ENCODE measurements at regions of chr6 and their contacts with region 1.

Region 1: DNA sequence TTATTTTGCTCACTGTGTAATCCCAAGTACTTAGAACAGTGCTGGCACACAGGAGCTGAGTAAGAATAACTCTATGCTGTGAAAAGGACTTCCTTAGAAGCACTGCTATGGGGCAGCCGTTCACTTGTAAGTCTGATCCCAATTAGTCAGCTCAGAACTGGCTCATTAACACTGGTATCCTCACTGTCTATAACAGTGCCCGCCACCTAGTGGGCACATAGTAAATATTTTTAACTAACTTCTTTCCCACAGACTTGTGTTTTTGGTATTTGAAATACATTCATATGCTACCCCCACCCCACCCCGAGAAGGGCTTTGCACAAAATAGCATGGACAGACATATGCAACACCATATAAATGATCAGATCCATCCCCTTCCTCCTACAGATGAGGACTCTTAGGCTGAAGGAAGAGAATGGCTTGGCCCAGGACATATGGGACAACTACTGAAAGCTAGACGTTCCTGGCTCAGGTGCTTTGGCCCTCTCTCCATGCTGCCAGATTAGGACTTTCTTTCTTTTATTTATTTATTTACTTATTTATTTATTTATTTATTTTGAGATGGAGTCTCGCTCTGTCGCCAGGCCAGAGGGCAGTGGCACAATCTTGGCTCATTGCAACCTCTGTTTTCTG is 47.1 kb downstream of the DST start:
- H3K4me3 ChIP-seq: no peak overlapping the region
- H3K27ac ChIP-seq: no peak overlapping the region
- H3K4me1 ChIP-seq: no peaks in the 10 kb centered on the region
- CTCF ChIP-seq: 0 out of 2 replicates have a peak, but pooled peaks have one; percentile 18

Region 2: GRCh38 chr6:56359201-56359899 is 236.3 kb before region 1 on chr6:
- CTCF ChIA-PET with region 1: interaction called, 117 read pairs
- POLR2A ChIA-PET with region 1: no interaction called
- H3K4me3 ChIP-seq: no peak overlapping the region
- H3K27ac ChIP-seq: no peak overlapping the region
- H3K4me1 ChIP-seq: peaks cover 3% of the 10 kb centered on the region; the same call in 1 of the 2 replicates
- CTCF ChIP-seq: peak; percentile 65

Region 3: DNA sequence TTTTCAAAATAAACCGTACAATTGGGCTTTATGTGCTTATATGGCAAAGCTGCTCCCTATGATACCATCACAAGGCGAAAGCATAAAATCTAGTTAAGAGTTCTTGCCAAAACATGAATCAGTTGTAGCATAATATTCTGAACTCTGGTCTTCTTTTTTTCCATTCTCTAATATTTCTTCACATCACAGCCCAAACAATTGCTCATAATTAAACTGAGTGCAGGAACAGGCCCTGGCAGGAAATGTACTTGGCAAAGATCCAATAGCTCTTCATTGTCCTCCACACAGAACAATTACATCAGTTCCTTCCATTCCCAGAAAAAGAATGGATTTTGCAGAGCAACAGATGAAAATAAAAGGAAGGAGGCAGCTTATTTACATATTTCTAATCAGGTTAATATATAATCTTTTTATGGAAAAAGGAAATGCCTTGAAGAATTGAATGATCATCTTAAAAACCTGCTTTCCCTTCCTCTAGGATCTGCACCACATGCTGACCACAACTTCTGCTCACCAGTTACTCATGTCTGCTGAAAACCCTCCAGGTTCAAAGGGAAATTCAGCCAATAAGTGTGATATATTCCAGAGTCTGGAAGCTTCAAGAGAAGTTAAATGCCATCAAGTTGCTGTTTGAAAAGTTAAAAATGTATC is 224.9 kb before region 1 on chr6:
- CTCF ChIA-PET with region 1: interaction called, 47 read pairs
- POLR2A ChIA-PET with region 1: no interaction called
- H3K4me3 ChIP-seq: no peak overlapping the region
- H3K27ac ChIP-seq: no peak overlapping the region
- H3K4me1 ChIP-seq: peaks cover 2% of the 10 kb centered on the region
- CTCF ChIP-seq: no peak

Region 4: DNA sequence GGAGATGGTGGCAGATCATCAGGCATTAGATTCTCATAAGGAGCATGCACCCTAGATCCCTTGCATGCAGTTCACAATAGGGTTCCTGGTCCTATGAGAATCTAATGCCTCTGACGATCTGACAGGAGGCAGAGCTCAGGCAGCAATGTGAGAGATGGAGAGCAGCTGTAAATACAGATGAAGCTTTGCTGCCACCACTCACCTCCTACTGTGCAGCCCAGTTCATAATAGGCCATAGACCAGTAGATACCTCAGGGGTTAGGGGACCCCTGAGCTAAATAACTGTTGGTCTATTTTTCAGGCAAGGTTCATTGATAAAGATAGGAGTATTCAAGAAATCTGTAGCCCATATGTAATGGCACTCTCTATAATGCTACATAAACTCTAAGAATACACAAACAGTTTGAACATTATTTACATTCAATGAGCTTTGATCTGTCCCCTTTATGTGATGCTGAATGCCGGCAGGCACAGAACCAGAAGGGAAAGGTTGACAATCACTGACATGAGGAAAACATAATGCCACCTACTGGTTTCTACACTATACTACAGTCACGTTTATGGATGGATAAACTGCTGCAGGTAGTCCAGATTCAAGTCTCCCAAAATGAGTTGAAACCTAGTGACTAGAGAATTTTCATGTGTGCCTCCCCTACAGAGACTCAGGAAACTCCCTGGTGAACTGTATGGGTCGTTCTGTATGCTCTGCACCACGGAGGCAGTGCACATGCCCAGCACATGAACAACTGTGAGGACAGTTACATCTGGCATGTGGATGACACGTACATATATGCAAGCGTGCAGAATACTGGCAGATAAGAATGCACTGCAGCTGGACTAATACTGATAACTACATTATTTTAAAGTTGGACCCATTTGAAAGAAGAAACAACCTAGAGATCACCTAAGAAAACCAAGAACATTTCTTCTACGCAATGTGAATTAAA is 24.9 kb before region 1 on chr6:
- CTCF ChIA-PET with region 1: interaction called, 23 read pairs
- POLR2A ChIA-PET with region 1: no interaction called
- H3K4me3 ChIP-seq: no peak overlapping the region
- H3K27ac ChIP-seq: no peak overlapping the region
- H3K4me1 ChIP-seq: peaks cover 10% of the 10 kb centered on the region; the same call in 1 of the 2 replicates
- CTCF ChIP-seq: no peak

Region 5: GRCh38 chr6:56581296-56581925 is 14.2 kb before region 1 on chr6:
- CTCF ChIA-PET with region 1: interaction called, 23 read pairs
- POLR2A ChIA-PET with region 1: no interaction called
- H3K4me3 ChIP-seq: no peak overlapping the region
- H3K27ac ChIP-seq: no peak overlapping the region
- H3K4me1 ChIP-seq: no peaks in the 10 kb centered on the region
- CTCF ChIP-seq: no peak

Region 6: GRCh38 chr6:56862415-56863175 is 267.0 kb after region 1 on chr6:
- CTCF ChIA-PET with region 1: no interaction called
- POLR2A ChIA-PET with region 1: no interaction called
- H3K4me3 ChIP-seq: no peak overlapping the region
- H3K27ac ChIP-seq: no peak overlapping the region
- H3K4me1 ChIP-seq: peaks cover 25% of the 10 kb centered on the region
- CTCF ChIP-seq: no peak